Left cardiac atrium (tissue), 4 donors: ENCODE measurements at regions of chr9 and their contacts with region 1.

Region 1: GRCh38 chr9:70484210-70485130 is 70.0 kb upstream of the KLF9 start:
- DNase-seq: no peak
- ATAC-seq: peak; percentile 67 to 75

Region 2: DNA sequence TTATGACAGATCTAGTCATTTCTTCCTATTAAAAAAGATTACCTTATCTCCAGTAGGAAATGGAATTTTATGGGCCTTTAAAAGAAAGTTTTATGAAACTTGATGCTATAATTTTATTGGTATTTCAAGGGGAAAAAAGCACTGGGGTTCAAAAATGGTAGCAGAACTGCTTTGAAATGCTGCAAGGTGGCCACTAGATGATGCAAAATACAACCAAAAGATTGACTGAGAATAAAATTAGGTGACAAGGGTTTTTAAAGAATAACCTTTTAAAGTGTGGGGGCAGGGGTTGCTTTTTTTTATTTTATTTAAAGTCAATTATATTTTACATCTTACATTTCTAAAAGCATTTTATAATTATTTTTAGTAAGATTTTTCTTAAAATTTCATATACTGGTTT is 131.7 kb before region 1 on chr9:
- intact Hi-C with region 1: loop called (anchors 10 kb)
- DNase-seq: no peak
- ATAC-seq: peak in 1 of 2 donors; percentile 55

Region 3: DNA sequence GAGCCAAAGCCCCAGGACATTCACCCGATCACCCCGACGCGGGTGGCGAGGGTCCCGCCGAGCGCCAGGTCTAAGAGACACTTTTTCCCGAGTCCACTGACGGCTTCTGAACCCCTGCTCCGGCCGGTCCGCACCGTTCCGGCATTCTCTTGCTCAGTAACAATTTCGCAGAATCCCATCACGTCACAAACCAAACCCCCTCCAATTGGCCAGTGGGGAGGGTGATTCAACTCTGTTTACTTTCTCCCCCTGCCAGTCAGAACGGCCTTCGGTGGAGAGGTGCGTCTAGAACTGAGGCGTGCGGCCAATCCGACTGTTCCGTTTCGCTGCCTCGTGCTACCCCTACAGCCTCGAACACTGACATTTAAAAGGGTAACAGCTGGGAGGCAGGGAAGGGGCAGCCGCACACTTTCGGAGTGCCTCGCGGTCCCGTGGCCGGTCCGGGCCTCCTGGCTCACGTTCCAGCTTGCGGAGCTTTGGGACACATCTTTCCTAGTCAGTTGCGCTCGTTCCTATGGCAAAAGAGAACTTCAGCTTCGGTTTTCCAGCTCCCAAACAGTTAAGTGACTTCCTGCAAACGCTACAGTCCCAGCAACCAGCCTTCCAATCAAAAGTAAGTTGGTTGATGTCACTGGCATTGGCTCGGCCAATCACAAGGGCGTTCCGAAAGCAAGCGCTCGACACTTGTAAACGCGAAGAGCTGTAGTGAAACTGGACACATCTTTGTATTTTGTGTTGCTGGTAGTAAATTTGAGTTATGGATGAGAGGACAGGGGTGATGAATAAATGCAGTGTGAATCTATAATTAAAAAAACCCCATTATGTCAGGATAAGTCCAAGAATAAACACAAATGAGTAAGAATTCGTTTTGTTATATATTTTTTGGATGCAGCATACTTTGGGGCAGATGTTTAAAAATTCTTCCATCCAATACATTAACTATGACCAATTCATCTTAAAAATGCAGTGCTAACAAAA is 70.4 kb before region 1 on chr9 and contains the start of gene KLF9:
- intact Hi-C with region 1: loop called (anchors 2 to 5 kb)
- DNase-seq: peak; percentile 95
- ATAC-seq: peak; percentile 67 to 78
- total RNA-seq, gene KLF9: 56.2 to 78.9 TPM

Region 4: GRCh38 chr9:70587201-70587600 is 102.7 kb after region 1 on chr9:
- intact Hi-C with region 1: loop called in 1 of 2 experiments (anchors 5 kb)
- DNase-seq: no peak
- ATAC-seq: peak; percentile 76 to 77